ENCODE measurements at regions of chr20 and their contacts with region 1.

Region 1: DNA sequence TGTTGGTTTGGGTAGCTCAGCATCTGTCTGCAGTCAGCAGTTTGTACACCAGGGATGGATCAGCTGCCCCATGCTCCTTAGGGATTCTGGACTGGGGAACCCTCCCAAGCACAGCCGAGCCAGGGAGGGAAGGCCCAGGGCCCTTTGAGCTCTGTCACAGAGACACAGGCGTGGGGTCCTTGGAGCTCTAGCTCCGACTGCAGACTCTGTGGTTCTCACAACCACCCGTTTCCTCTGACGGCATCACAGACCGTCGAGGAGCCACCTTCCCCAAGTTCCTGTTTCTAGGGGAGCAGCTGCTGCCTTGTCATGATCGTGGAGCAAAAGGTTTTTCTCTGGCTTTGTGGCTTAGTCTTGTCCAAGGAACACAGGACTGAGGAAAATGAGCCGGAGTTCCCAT is at the start of gene SLA2:
- DNase-seq: peak; percentile 82
- H3K4me3 Mint-ChIP-seq: peak within 1 kb of the TSS; percentile 96
- H3K27ac Mint-ChIP-seq: peak within 1 kb of the TSS; percentile 97
- H3K4me1 Mint-ChIP-seq: peaks cover 49% of the 10 kb centered on the region
- H3K27me3 Mint-ChIP-seq: no peaks in the 10 kb centered on the region
- total RNA-seq, gene SLA2: 78.6 to 79.9 TPM

Region 2: DNA sequence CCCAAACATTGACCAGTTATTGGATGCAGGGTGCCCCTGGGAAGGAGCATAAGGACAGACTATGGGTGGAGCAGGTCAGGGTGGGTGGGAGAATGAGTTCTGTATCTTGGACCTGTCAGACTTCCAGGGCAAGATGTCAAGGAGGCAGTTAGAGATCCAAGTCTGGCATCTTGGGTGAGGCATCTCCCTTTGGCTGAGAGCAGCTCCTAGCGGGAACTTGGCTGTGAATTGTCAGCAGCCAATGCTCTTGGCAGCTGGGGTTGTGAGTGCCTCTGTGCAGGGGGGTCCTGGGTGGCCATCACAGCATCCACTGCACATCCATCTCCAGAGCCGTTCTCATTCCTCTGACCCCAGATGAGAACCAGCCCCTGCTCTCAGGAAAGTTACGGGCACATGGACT is 221.7 kb before region 1 on chr20:
- CTCF ChIA-PET with region 1: no interaction called
- POLR2A ChIA-PET with region 1: no interaction called
- DNase-seq: no peak
- H3K4me3 Mint-ChIP-seq: no peak overlapping the region
- H3K27ac Mint-ChIP-seq: no peak overlapping the region
- H3K4me1 Mint-ChIP-seq: no peaks in the 10 kb centered on the region
- H3K27me3 Mint-ChIP-seq: peaks cover 16% of the 10 kb centered on the region

Region 3: DNA sequence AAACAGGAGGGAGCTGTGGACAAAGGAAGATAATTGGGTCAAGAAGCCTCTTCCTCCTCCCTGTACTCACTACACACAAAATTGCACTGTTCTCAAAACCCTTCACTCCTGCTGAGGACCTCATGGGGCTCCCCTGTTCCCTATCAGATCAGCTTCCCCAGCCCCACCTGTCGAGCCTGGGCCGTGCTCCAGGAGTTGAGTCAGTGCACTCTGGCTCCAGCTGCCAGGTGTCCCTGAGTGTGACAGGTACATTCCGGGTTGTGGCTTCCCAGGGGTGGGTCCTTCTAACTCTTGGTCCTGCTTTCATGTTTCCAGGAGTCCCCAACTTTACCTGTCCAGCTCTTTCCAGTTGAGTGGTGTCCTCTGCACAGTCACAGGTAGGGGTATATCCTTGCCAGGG is 32.0 kb before region 1 on chr20:
- CTCF ChIA-PET with region 1: interaction called, 7 read pairs
- POLR2A ChIA-PET with region 1: interaction called, 32 read pairs
- DNase-seq: no peak
- H3K4me3 Mint-ChIP-seq: no peak overlapping the region
- H3K27ac Mint-ChIP-seq: no peak overlapping the region
- H3K4me1 Mint-ChIP-seq: peaks cover 9% of the 10 kb centered on the region
- H3K27me3 Mint-ChIP-seq: no peaks in the 10 kb centered on the region

Region 4: DNA sequence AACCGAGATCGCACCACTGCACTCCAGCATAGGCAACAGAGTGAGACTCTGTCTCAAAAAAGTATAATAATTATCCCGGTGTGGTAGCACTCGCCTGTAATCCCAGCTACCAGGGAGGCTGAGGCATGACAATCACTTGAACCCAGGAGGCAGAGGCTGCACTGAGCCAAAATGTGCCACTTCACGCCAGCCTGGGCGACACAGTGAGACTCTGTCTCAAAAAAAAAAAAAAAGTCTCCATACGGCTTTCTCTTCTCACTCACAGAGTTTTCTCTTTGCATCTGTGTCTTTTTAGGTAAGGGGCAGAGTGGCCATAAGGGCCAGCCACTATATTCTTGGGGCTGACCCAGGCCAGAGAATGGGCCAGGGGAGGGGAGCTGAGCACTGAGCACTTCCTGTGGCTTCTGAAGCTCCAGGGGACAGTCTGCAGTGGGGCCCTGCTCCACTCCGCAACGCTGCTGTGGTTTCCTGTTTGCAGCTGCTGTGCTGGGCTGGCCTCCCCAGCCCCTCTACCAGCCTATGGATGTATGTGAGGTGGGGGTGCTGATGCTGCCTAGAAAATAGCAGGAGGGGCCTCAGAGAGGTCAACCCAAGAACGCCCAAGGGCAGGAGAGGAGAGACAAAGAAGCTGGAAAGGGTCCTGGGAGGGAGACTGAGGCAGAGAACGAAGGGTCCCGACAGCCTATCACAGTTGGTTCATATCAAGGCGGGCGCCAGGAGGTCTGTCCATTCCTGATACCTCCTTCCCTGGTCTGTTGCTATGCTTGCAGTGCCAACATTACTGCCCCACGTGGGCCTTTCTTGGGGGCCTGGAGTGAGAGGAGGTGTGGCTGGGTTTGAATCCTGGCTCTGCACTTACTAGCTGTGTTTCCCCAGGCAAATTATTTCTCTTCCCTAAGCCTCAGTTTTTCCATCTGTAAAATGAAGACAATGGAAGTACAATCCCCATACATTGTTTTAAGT is 16.0 kb before region 1 on chr20:
- CTCF ChIA-PET with region 1: interaction called, 11 read pairs
- POLR2A ChIA-PET with region 1: interaction called, 75 read pairs
- DNase-seq: peak; percentile 70
- H3K4me3 Mint-ChIP-seq: peak overlapping the region; percentile 58
- H3K27ac Mint-ChIP-seq: peak overlapping the region; percentile 94
- H3K4me1 Mint-ChIP-seq: peaks cover 44% of the 10 kb centered on the region
- H3K27me3 Mint-ChIP-seq: no peaks in the 10 kb centered on the region

Region 5: DNA sequence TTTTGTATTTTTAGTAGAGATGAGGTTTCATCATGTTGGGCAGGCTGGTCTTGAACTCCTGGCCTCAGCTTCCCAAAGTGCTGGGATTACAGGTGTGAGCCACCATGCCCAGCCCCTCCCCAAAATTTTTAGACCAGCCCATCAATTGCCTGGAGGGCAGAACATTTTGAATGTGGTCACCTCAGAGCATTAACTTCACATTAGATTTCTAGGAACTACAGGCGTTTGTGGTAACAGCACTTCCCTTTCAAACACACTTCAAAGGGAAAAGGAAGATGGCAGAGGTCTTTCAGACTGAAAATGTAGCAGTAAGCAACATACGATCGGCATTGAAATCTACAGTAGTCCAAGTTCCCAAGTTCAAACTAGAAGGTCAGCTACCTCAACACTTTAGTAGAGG is 12.3 kb after region 1 on chr20:
- CTCF ChIA-PET with region 1: interaction called, 10 read pairs
- POLR2A ChIA-PET with region 1: interaction called, 57 read pairs
- DNase-seq: peak; percentile 44
- H3K4me3 Mint-ChIP-seq: peak overlapping the region; percentile 43
- H3K27ac Mint-ChIP-seq: peak overlapping the region; percentile 81
- H3K4me1 Mint-ChIP-seq: peaks cover 22% of the 10 kb centered on the region
- H3K27me3 Mint-ChIP-seq: no peaks in the 10 kb centered on the region

Region 6: DNA sequence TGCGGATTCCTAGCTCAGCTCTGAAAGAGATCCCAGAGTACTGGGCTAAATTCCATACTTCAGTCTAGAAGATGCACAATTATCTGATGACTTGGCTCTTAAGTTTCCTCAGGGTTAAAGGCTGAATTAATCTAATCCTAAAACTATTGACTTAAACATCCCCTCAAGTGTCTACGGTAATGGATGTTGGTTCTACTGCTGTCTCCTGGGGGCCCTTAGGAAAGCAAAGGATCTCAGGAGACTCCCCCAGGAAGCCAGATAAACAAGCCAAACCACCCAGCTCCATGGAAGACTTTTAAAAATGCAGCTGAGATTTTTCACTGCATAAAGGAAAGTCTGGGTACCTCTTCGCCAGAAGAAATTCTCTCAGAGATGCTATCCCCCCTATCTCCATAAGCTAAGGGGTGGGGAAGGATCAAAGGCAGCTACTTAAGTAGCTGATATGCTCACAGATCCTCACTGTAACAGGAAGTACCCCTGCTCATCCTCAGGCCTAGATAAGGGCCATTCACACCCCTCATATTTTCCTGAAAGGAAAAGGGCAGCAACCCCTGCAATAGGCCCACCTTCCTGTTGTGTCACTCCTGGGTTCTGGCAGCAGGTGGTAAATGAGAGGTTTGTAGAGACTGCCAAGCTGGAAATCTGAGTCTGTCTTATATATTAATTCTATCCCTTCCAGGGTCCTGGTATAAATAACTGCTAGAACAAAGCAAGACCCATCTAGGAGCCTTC is 90.6 kb after region 1 on chr20:
- CTCF ChIA-PET with region 1: interaction called, 12 read pairs
- POLR2A ChIA-PET with region 1: interaction called, 22 read pairs
- DNase-seq: no peak
- H3K4me3 Mint-ChIP-seq: no peak overlapping the region
- H3K27ac Mint-ChIP-seq: no peak overlapping the region
- H3K4me1 Mint-ChIP-seq: peaks cover 30% of the 10 kb centered on the region
- H3K27me3 Mint-ChIP-seq: no peaks in the 10 kb centered on the region

Region 7: DNA sequence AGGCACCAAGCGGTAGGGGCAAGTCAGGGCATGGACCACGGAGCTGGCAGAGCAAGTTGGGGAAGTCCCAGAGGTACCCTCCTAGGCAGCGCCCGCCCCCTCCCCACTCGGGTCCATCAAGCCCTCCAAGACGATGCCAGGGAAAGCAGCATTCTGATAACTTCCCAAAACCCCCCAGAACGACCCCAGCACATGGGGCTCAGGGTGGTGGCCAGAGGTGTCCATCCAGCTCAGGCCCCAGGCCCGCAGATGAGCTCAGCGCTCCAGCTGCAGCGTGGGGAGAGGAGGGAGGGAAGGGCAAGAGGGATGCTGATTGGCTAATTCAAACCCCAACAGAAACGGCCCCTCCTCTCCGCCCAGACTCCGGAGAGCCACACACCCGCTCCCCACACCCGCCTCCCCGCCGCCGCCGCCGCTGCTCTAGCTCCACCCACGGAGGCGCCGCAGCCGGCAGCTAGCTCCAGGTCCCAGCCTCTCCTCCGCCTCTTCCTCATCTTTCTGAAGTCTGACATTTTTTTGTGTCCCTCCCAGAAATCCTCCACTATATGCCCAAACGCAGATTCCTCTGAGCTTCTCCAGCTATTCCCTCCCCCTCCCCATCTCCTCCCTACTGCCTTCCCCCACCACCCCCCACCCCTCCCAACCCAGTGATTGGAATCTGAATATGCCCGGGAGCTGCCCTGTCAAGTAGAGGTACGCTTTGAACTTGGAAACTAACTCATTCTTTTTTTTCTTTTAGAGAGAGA is 189.6 kb after region 1 on chr20:
- CTCF ChIA-PET with region 1: interaction called, 3 read pairs
- POLR2A ChIA-PET with region 1: interaction called, 11 read pairs
- DNase-seq: peak; percentile 92
- H3K4me3 Mint-ChIP-seq: peak overlapping the region; percentile 82
- H3K27ac Mint-ChIP-seq: peak overlapping the region; percentile 87
- H3K4me1 Mint-ChIP-seq: peaks cover 27% of the 10 kb centered on the region
- H3K27me3 Mint-ChIP-seq: no peaks in the 10 kb centered on the region